ENCODE measurements at regions of chr16 and their contacts with region 1.

Region 1: DNA sequence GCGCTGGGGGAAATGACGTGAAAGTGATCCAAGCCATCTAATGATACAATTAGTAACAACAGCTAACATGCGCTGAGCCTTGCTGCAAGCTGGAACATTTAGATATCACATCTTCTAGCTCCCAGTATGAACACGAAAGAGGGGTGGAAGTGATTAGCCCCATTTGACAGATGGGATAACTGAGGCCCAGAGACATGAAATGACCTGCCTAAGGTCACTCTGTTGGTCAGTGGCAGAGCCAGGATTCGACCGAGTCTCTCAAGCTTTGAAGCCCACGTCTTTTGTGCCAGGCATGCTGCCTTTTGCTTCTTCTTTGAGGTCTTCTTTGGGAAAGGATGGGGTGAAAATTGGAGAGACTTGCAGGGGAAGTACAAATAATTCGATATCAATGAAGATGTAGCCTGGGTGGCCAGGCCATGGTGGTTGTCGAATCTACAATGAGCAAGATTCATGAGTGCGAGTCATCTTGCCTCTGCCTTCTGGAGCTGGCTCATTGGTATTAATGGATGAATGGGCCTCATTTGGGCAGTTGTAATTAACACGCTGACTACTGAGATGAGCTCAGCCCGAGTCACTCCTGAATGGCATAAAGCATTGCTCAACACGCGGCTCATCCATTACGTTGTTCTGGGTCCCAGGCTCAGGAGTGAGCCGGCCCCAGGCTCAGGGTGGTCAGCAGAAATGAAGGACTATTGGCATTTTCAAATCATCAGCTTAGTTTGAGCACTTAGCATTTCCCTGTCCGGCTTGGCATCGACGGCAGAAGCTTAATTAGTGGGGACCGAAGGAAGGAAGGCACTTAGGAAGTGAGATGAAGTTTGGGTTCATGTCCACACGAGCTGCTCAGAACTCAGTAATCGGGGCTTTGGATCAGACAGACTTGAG is 28.0 kb upstream of the GPRC5B start:
- DNase-seq: no peak
- ATAC-seq: no peak
- H3K4me3 ChIP-seq: no peak overlapping the region
- H3K27ac ChIP-seq: no peak overlapping the region
- H3K4me1 ChIP-seq: peaks cover 9% of the 10 kb centered on the region
- CTCF ChIP-seq: no peak
- EP300 ChIP-seq: no peak
- POLR2A ChIP-seq: no peak
- RAD21 ChIP-seq: no peak

Region 2: DNA sequence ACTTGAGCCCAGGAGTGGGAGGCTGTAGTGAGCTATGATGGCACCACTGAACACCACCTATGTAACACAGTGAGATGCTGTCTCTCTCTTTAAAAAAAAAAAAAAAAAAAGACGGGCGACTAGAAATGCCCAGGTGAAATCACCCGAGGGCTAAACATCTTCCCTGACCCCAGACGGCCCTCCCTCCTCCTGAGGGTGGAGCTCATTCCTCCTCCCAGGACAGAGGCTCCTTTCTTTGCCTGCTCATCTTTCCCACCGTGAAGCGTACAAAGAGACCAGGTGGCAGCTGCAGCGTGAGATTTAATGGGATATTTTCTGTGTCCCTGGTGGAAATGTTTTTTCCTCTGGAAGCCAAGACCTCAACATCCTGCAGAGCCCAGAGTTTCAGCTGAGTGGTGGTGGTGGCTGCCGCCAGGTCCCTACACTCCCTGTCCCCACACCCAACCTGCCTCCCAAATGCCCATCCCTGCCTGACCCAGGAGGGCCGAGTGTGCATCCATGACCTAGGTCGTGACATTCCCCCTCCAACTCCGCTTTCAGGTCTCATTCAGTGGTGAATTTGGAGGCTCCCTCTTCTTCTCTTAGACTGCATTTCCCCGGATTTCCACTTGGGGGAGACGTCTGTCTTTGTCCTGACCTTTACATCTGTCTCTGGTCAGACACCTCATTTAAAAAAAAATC is 13.6 kb before region 1 on chr16:
- CTCF ChIA-PET with region 1: interaction called, 29 read pairs
- POLR2A ChIA-PET with region 1: no interaction called
- DNase-seq: peak; percentile 66 to 68
- ATAC-seq: peak; percentile 87 to 90; a peak in 5 of 6 replicates
- H3K4me3 ChIP-seq: no peak overlapping the region
- H3K27ac ChIP-seq: no peak overlapping the region
- H3K4me1 ChIP-seq: 0 out of 3 replicates have a peak, but pooled peaks cover 4% of the 10 kb centered on the region
- CTCF ChIP-seq: peak; percentile 69
- EP300 ChIP-seq: no peak
- POLR2A ChIP-seq: no peak
- RAD21 ChIP-seq: peak; percentile 78 to 84

Measured in A549 (cell line).